ENCODE measurements at regions of chr11 and their contacts with region 1.

Region 1: GRCh38 chr11:79400717-79401686 is 39.8 kb downstream of the TENM4 start:
- DNase-seq: peak; percentile 57
- H3K4me3 ChIP-seq: no peak overlapping the region; a peak in 1 of 4 replicates
- H3K27ac ChIP-seq: no peak overlapping the region
- H3K4me1 ChIP-seq: peaks cover 8 to 12% of the 10 kb centered on the region in 2 experiments
- H3K27me3 ChIP-seq: no peaks in the 10 kb centered on the region
- CTCF ChIP-seq: peak; percentile 83
- EP300 ChIP-seq: no peak
- RAD21 ChIP-seq: peak; percentile 76

Region 2: GRCh38 chr11:79412772-79413171 is 11.8 kb after region 1 on chr11:
- CTCF ChIA-PET with region 1: interaction called, 29 read pairs
- POLR2A ChIA-PET with region 1: no interaction called
- DNase-seq: no peak
- H3K4me3 ChIP-seq: no peak overlapping the region
- H3K27ac ChIP-seq: peak overlapping the region; percentile 8 to 97; a peak in 3 of 4 replicates
- H3K4me1 ChIP-seq: peaks cover 14 to 29% of the 10 kb centered on the region in 2 experiments
- H3K27me3 ChIP-seq: no peaks in the 10 kb centered on the region
- CTCF ChIP-seq: no peak
- EP300 ChIP-seq: no peak
- RAD21 ChIP-seq: no peak

Region 3: DNA sequence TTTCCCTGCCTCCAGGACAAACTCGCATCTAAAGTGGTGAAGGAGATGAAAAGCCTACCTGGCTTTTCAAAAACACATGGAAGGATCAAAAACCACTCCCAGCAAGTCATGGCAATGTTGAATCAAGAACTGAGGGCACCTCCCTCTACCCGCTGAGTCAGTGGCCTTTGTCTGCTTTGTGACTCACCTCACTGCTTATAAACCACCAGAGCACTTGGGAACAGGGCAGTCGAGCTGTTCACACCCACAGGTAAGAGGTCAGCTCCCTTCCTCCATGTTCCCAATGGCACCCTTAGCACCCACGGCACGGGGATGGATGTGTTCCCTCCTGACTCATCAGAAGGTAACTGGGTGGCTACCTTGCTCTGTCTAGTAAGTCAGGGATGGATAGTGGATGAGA is 18.1 kb after region 1 on chr11:
- CTCF ChIA-PET with region 1: interaction called, 12 read pairs
- POLR2A ChIA-PET with region 1: no interaction called
- DNase-seq: no peak
- H3K4me3 ChIP-seq: no peak overlapping the region
- H3K27ac ChIP-seq: peak overlapping the region in 1 of 2 experiments; percentile 61; a peak in 2 of 4 replicates
- H3K4me1 ChIP-seq: peaks cover 8 to 28% of the 10 kb centered on the region in 2 experiments; a peak in 3 of 4 replicates
- H3K27me3 ChIP-seq: no peaks in the 10 kb centered on the region
- CTCF ChIP-seq: no peak
- EP300 ChIP-seq: no peak
- RAD21 ChIP-seq: no peak

Region 4: GRCh38 chr11:79440441-79441194 is 39.6 kb after region 1 on chr11 and contains the start of gene TENM4:
- CTCF ChIA-PET with region 1: interaction called, 10 read pairs
- POLR2A ChIA-PET with region 1: interaction called, 3 read pairs
- DNase-seq: peak; percentile 86
- H3K4me3 ChIP-seq: peak within 1 kb of the TSS; percentile 91 to 92
- H3K27ac ChIP-seq: peak within 1 kb of the TSS; percentile 76 to 91
- H3K4me1 ChIP-seq: peaks cover 9 to 22% of the 10 kb centered on the region in 2 experiments; a peak in 2 of 4 replicates
- H3K27me3 ChIP-seq: no peaks in the 10 kb centered on the region
- CTCF ChIP-seq: peak; percentile 63
- EP300 ChIP-seq: no peak
- RAD21 ChIP-seq: peak; percentile 36; the same call in 1 of the 2 replicates
- polyA plus RNA-seq, gene TENM4: 6.0 and 16.7 TPM in 2 replicates

Region 5: GRCh38 chr11:79493555-79494171 is 92.7 kb after region 1 on chr11:
- CTCF ChIA-PET with region 1: interaction called, 24 read pairs
- POLR2A ChIA-PET with region 1: no interaction called
- DNase-seq: peak; percentile 85
- H3K4me3 ChIP-seq: no peak overlapping the region; a peak in 1 of 4 replicates
- H3K27ac ChIP-seq: no peak overlapping the region
- H3K4me1 ChIP-seq: peaks cover 0 to 2% of the 10 kb centered on the region in 2 experiments; a peak in 1 of 4 replicates
- H3K27me3 ChIP-seq: no peaks in the 10 kb centered on the region
- CTCF ChIP-seq: peak; percentile 93
- EP300 ChIP-seq: no peak
- RAD21 ChIP-seq: peak; percentile 75

Measured in SK-N-SH (cell line).